Activated CD4-positive, alpha-beta T cell treated with anti-CD3 and anti-CD28 coated beads for 36 hours (primary cell): ENCODE measurements at regions of chr5 and their contacts with region 1.

Region 1: DNA sequence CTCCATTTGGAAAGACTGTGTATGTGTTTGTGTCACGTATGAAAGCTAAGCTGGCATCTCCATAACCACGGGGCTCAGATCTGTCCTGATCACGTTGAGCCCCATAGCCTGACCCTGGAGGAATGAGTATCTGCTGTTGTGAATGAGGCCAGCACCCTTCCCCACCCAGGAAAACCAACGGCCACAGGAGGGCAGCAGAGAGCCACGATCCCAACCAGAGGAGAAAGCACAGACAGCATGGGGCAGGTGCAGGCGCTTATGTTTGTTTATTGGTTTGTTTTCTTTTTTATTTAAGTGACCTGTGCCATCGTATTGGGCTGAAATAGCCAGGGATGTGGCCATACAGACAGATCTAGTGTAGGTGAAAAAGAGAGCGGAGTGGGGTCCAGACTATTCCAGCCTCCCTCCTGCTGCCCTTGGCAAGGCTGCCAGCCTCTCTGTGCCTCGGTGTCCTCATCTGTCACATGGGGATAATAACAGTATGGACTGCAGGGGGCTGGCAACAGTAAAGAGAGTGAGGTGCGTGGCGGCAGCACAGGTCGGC is 12.0 kb downstream of the OR2V2 start:
- DNase-seq: peak; percentile 96
- ATAC-seq: peak; percentile 76
- H3K4me3 Mint-ChIP-seq: peak overlapping the region; percentile 18
- H3K27ac Mint-ChIP-seq: peak overlapping the region; percentile 88
- H3K4me1 Mint-ChIP-seq: peaks cover 42% of the 10 kb centered on the region
- H3K27me3 Mint-ChIP-seq: peaks cover 3% of the 10 kb centered on the region

Region 2: DNA sequence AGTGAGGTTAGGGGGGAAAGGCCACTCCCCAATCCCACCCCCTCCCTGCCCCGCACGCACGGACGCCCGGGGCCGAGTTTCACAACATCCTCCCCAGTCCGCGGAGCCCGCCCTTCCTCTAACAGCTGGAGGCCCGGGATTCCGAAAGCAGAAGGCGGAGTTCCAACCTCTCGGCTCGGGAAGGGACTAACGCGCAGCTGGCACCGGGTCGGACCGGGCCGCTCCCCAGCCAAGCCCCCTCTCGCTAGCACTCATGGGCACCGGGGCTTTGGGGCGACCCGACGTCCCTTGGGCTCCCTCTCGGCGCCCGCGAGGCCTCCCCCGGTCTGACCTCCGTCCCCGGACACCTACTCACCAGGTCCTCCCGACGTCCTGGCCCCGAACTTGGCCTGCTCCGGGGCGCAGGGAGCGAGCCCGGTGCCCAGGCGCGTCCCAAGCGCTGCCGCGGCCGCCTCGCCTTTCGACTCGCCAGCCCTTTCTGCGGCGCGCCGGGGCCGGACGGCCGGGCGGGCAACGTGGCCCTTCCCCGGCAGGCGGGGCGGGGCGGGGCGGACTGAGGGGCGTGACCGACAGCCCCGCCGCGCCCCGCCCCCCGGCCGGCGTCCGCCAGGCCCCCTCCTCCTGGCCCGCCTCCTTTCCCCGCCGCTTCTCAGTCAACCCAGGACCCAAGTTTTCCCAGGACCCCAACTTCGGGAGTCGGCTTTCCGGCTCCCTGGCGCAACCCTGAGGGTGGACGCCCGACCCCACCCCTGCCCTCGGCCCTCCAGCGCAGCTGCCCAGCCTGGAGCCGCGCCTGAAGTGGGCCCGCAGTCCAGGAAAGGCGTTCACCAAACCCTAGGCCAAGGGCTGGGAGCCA is 356.8 kb before region 1 on chr5 and contains the start of gene MGAT1:
- CTCF ChIA-PET with region 1: no interaction called
- POLR2A ChIA-PET with region 1: no interaction called
- intact Hi-C with region 1: loop called in 1 of 2 experiments (anchors 2 kb)
- DNase-seq: peak; percentile 90
- ATAC-seq: peak; percentile 46
- H3K4me3 Mint-ChIP-seq: peak within 1 kb of the TSS; percentile 91
- H3K27ac Mint-ChIP-seq: peak within 1 kb of the TSS; percentile 89
- H3K4me1 Mint-ChIP-seq: peaks cover 77% of the 10 kb centered on the region
- H3K27me3 Mint-ChIP-seq: no peaks in the 10 kb centered on the region
- total RNA-seq, gene MGAT1: 93.2 to 125 TPM

Region 3: GRCh38 chr5:180868960-180869359 is 290.4 kb before region 1 on chr5:
- CTCF ChIA-PET with region 1: interaction called, 4 read pairs
- POLR2A ChIA-PET with region 1: no interaction called
- intact Hi-C with region 1: loop called (anchors 2 to 5 kb)
- DNase-seq: peak; percentile 87
- ATAC-seq: peak; percentile 76
- H3K4me3 Mint-ChIP-seq: no peak overlapping the region
- H3K27ac Mint-ChIP-seq: no peak overlapping the region
- H3K4me1 Mint-ChIP-seq: peaks cover 5% of the 10 kb centered on the region
- H3K27me3 Mint-ChIP-seq: peaks cover 4% of the 10 kb centered on the region

Region 4: DNA sequence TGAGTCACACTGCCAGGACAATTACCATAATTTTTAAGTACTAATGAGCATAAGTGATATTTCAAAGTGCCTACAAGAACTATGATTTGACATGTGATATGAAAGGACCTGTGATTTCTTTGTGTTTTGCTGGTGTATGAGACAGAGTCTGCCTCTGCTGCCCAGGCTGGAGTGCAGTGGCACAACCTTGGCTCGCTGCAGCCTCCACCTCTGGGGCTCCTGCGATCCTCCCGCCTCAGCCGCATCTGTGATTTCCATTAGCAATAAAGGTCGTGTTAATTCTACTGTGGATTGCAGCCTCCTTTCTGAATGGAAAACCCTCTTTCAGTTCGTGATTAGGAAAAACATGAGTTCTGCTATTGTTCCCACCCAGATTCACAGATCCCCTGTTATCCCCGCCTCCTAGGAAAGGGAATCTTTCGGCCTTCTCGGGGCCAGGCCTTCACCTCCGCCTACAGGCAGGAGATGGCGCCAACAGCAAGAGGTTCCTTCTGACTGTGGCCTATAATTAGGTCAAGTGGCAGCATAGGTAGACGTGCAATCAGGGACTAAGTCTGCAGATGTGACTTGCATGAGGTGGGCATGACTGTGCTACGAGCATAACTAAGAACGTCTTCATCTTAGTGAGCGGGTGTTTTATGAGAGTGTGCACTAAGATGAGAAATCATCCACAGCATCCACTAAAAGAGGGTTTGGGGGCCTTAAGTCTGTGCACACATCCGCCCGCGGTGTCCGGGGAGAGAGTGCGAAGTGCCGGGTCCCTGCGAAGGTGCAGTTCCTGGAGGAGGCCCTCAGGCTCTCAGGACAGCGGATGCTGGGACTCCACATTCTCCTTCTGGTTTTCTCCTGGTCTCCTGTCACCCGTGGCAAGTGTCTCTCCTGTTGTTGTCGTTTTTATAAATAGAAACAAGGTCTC is 22.6 kb after region 1 on chr5:
- CTCF ChIA-PET with region 1: interaction called, 8 read pairs
- POLR2A ChIA-PET with region 1: no interaction called
- intact Hi-C with region 1: loop called in 1 of 2 experiments (anchors 1 kb)
- DNase-seq: peak; percentile 78
- ATAC-seq: peak; percentile 63
- H3K4me3 Mint-ChIP-seq: no peak overlapping the region
- H3K27ac Mint-ChIP-seq: no peak overlapping the region
- H3K4me1 Mint-ChIP-seq: peaks cover 25% of the 10 kb centered on the region
- H3K27me3 Mint-ChIP-seq: no peaks in the 10 kb centered on the region

Region 5: DNA sequence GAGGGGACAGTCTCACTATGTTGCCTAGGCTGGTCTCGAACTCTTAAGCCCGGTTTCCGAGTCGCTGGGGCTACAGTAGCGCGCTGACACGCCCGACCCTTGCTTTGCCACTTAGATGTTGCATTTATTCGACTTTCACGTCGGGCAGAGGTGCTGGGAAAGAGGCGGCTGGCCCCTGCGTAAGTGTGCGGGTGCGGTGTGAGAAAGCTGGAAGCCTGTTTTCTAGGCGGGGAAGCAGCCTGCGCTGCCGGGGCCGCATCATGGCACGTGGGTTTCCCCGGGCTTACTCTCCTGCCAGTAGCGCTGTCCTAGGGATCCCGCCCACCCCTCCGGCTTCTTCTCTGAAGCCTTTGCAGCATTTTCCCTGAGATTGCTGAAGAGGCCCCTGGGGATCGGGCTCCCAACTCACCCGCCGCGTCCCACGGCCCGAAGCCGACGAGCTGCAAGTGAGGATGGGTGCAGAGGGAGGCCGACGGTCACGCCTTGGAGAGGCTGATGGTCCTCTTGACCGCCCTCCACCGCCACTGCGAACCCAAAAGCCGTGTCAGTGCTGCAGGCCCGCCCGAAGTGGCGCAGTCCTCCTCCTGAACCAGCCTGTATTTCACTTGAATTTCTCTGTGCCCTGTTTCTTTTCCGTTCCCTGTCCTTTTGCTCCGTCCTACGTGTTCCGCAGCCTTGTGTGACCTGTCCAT is 57.9 kb after region 1 on chr5:
- CTCF ChIA-PET with region 1: interaction called, 3 read pairs
- POLR2A ChIA-PET with region 1: interaction called, 3 read pairs
- intact Hi-C with region 1: loop called in 1 of 2 experiments (anchors 1 kb)
- DNase-seq: peak; percentile 80
- ATAC-seq: peak; percentile 10
- H3K4me3 Mint-ChIP-seq: peak overlapping the region; percentile 77
- H3K27ac Mint-ChIP-seq: peak overlapping the region; percentile 85
- H3K4me1 Mint-ChIP-seq: peaks cover 45% of the 10 kb centered on the region
- H3K27me3 Mint-ChIP-seq: no peaks in the 10 kb centered on the region

Region 6: DNA sequence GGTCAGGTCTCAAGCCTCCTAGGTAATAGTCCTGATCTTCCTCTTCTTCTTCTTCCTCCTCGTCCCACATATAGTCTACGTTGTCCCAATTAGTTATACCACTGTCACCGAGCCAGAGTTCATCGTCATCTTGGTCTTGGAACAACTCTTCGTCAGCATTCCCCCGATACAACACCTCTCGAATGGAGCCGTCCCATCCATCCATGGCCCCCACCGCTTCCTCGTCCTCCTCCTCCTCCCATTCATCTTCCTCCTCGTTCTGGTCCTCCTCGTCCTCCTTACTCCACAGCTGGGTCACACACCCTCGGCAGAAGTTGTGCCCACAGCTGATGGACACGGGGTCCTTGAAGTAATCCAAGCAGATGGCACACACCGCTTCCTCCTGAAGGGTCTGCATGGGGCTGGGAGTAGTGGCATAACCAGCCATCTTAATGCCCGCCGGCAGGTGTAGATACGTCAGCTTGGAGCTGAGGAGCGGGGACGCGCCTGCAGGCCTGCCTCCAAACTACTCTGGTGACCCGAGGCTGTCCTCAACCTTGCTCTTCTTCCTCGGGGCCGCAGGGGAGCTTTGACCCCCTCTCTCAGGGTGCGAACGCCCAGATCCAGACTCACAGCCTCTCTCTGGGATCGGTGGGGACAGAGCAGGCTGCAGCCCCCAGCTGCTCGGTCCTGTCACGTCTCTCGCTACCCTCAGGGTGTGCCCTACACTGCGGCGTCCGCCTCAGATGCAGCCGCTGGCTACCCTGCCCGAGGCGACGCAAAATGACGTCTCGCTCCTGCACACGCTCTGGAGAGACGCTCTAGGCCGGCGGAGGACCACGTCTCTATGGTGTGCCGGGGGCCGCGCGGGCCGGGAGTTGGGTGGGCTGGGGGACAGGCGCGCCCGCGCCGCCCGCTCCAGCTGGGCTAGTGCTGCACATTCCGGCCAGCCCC is 101.3 kb after region 1 on chr5 and contains the start of gene TRIM52:
- CTCF ChIA-PET with region 1: no interaction called
- POLR2A ChIA-PET with region 1: no interaction called
- intact Hi-C with region 1: loop called in 1 of 2 experiments (anchors 1 kb)
- DNase-seq: peak; percentile 95
- ATAC-seq: peak; percentile 85
- H3K4me3 Mint-ChIP-seq: peak within 1 kb of the TSS; percentile 91
- H3K27ac Mint-ChIP-seq: peak within 1 kb of the TSS; percentile 95
- H3K4me1 Mint-ChIP-seq: peaks cover 38% of the 10 kb centered on the region
- H3K27me3 Mint-ChIP-seq: no peaks in the 10 kb centered on the region
- total RNA-seq, gene TRIM52: 10.4 to 13.1 TPM